ENCODE measurements at regions of chr11 and their contacts with region 1.

Region 1: DNA sequence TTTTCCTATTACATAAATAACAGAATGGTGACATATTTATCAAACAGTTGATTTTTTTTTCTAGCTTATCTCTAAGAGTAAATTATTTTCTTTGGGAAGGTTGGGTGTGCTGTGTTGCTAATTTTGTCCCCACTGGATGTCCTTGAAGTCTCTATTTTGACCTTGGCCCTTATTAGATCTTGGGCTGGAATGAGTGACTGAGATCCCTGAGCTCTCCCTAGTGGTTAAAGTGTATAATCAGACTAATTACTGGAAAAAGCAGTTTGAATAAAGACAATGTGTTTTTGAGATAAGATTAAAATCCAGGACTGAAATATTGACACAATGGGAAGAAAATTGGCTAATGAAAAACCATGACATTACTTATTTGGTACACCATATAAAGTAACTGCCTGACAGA is 56.1 kb downstream of the AASDHPPT start:
- DNase-seq: no peak
- H3K4me3 Mint-ChIP-seq: no peak overlapping the region
- H3K27ac Mint-ChIP-seq: no peak overlapping the region
- H3K4me1 Mint-ChIP-seq: no peaks in the 10 kb centered on the region
- H3K27me3 Mint-ChIP-seq: peaks cover 12% of the 10 kb centered on the region

Region 2: GRCh38 chr11:106087815-106088435 is 45.6 kb before region 1 on chr11:
- intact Hi-C with region 1: loop called (anchors 1 kb)
- DNase-seq: no peak
- H3K4me3 Mint-ChIP-seq: no peak overlapping the region
- H3K27ac Mint-ChIP-seq: no peak overlapping the region
- H3K4me1 Mint-ChIP-seq: peaks cover 50% of the 10 kb centered on the region
- H3K27me3 Mint-ChIP-seq: no peaks in the 10 kb centered on the region

Region 3: GRCh38 chr11:106172378-106172991 is 39.0 kb after region 1 on chr11:
- intact Hi-C with region 1: no loop called
- DNase-seq: no peak
- H3K4me3 Mint-ChIP-seq: no peak overlapping the region
- H3K27ac Mint-ChIP-seq: no peak overlapping the region
- H3K4me1 Mint-ChIP-seq: no peaks in the 10 kb centered on the region
- H3K27me3 Mint-ChIP-seq: no peaks in the 10 kb centered on the region

Region 4: DNA sequence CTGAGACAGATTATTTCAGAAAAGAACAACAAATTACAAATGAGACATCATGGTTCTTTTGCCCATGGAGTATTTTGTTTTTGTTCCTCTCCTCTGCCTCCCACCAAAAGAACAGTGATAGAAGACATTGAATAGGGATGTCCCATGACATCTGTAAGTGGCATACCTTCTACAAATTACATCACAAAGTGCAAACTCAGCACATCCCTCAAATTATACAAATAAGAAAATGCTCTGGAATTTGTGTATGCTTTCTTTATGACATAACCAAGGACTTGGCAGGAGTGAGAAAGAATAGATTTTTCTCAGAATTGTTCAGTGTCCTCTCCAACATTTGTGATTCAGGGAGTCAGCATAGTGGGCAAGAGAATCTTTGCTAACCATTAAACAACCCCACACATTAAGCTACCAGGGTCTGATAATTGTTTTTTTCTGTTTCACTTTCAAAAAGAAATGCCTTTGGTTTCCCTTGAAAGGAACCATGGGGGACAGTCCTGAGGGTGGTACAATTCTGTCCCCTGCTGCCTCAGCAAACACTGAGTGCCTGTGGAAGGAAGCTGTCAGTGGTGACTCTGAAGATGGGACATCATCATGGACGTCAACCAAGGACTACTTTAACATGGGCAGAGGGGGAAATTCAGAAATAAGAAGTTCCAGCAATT is 374.2 kb after region 1 on chr11:
- intact Hi-C with region 1: no loop called
- DNase-seq: no peak
- H3K4me3 Mint-ChIP-seq: no peak overlapping the region
- H3K27ac Mint-ChIP-seq: no peak overlapping the region
- H3K4me1 Mint-ChIP-seq: no peaks in the 10 kb centered on the region
- H3K27me3 Mint-ChIP-seq: no peaks in the 10 kb centered on the region

Measured in activated T-helper 1 cell treated with anti-CD3 and anti-CD28 coated beads, Interleukin-12 subunit alpha, Interleukin-12 subunit beta, Interleukin-2, Interleukin-4 antibody, amounts not matched to agents 30 ng/mL and 10 ng/mL and 1 ng/mL, durations not matched to agents 14 hours and 24 hours and 36 hours (primary cell).